ENCODE measurements at regions of chr11 and their contacts with region 1.

Region 1: DNA sequence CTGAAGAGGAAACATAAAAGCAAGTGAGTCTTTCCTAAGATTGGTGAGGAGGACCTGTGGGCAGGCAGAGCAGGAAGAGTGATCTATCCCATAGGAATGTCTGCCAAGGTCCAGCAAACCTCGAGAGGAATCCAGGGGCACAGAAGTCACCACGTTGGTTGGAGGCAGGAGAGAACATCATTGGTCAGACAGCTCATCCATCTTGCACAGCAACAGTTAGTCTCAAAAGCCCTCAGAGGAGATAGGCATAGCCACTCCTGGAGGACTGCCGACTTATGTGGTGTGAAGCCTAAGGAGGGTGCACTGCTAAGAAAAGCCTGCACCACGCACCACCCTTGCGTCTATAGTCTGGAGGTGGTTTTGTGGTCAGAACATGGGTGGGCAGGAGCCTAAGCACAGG is 109.1 kb downstream of the RASSF10 start:
- DNase-seq: no peak
- H3K4me3 ChIP-seq: no peak overlapping the region
- H3K27ac ChIP-seq: no peak overlapping the region
- H3K4me1 ChIP-seq: no peaks in the 10 kb centered on the region
- H3K27me3 ChIP-seq: no peaks in the 10 kb centered on the region
- CTCF ChIP-seq: no peak
- POLR2A ChIP-seq: no peak

Region 2: DNA sequence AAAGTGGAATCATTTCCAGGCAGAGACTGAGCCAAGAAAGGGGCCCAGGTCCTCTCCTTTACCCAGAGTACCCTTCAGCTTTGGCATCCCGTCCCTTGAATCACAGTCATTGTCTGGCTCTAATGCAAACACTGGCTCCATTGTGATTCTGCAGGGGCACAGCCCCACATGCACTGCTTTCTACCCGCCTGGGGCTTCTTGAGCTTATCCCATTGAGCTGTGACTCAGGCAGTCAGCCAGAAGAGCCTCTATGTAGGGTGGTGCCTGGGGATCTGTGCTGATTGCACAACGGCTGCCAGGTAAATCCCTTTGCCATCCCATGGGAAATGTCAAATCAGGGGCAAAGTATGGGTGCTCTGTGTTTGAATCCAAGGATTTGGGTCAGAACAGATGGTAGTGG is 20.1 kb before region 1 on chr11:
- intact Hi-C with region 1: loop called (anchors 2 kb)
- DNase-seq: peak in 1 of 2 donors; percentile 79
- H3K4me3 ChIP-seq: no peak overlapping the region
- H3K27ac ChIP-seq: no peak overlapping the region
- H3K4me1 ChIP-seq: peaks cover 11% of the 10 kb centered on the region
- H3K27me3 ChIP-seq: no peaks in the 10 kb centered on the region
- CTCF ChIP-seq: no peak
- POLR2A ChIP-seq: no peak

Region 3: GRCh38 chr11:13140028-13140870 is 22.1 kb after region 1 on chr11:
- intact Hi-C with region 1: no loop called
- DNase-seq: no peak
- H3K4me3 ChIP-seq: no peak overlapping the region
- H3K27ac ChIP-seq: no peak overlapping the region
- H3K4me1 ChIP-seq: no peaks in the 10 kb centered on the region
- H3K27me3 ChIP-seq: no peaks in the 10 kb centered on the region
- CTCF ChIP-seq: no peak
- POLR2A ChIP-seq: no peak

Measured in vagina (tissue), 2 donors.